Activated B cell treated with CpG ODN at 0.5 μM for 24 hours (primary cell): ENCODE measurements at regions of chr1 and their contacts with region 1.

Region 1: DNA sequence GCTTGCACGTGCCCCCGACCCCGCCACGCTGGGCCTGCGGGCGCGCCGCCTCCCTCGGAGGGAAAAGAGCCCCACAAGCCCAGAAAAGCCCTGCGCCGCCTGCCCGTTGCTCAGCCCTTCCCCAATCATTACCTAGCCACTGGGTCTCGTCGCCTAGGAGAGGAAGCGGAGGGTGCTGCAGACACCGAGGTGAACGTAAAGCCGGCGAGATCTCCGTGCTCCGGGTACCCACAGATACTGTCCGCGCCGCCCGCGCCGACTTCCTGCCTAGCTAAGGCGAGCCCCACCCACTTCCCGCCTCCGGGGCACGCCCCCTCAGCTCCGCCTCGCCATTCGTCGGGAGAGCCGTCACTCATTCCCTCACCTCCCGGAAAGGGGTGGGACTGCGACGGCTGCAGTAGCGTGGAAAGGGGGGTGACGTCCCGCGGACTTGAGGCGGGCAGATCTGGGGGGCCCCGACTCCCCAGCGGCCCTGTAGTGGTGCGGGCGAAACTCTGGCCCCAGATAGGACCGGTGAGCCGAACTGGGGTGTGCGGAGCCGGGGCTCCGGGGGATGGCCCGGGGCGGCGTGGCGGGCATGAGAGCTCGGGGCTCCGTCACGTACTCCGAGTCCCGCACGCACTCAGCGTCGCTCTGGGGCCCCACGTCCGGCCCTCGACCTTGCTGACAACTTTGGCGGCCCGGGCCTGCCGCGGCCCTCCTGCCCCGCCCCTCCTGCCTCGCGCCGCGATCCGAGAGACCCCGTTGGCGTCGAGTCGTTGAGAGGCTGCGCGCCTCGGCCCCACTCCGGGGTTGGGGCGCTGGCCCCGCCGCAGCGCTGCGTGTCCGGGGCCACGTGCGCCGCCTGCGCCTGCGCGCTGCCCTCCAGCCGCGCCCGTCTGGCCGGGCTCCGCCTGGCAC is at the start of gene ENO1:
- DNase-seq: peak; percentile 100
- ATAC-seq: peak; percentile 79
- H3K4me3 Mint-ChIP-seq: peak within 1 kb of the TSS; percentile 95
- H3K27ac Mint-ChIP-seq: peak within 1 kb of the TSS; percentile 96
- H3K4me1 Mint-ChIP-seq: peaks cover 45% of the 10 kb centered on the region
- H3K27me3 Mint-ChIP-seq: no peaks in the 10 kb centered on the region
- CTCF ChIP-seq: no peak
- total RNA-seq, gene ENO1: 837 and 886 TPM in 2 replicates

Region 2: DNA sequence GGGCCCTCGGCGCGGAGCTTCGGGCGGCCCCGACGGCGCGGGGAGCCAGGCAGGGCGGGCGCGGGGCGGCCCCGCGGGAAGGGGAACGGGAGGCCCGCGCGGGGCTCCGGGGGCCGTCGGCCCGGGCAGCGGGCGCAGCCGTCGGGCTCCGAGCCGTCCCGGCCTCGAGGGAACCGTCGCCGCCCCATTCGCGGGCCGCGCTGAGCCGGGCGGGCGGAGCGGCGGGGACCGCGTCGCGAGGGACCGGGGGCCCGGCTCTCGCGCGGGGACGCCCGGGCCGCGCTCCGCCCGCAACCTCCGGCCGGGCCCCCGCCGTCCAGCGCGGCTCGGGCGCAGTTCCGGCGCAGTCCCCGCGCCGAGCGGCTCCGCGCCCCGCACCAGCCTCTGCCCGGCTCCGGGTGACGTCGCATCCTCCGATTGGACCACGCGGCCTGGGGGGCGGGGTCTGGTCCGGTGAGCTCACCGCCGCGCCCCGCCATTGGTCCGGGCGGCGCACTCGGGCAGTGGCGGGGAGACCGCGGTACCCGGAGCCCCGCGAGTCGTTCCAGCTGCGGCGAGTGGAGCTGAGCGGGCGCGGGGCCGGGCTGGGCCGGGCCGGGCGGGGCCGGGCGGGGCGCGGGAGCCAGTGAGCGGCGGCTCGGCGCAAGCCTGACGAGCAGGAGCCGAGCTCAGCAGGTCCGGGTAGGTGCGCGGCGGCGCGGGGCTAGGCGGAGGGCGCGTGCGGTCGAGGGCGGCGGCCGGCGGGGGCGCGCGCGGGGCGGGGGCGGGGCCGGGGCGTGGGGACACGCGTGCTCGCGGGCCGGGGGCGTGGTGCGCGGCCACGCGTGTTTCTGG is 1174.3 kb before region 1 on chr1:
- CTCF ChIA-PET with region 1: no interaction called
- POLR2A ChIA-PET with region 1: no interaction called
- intact Hi-C with region 1: loop called (anchors 5 kb)
- DNase-seq: peak; percentile 99
- ATAC-seq: peak; percentile 98
- H3K4me3 Mint-ChIP-seq: peak overlapping the region; percentile 82
- H3K27ac Mint-ChIP-seq: no peak overlapping the region
- H3K4me1 Mint-ChIP-seq: peaks cover 12% of the 10 kb centered on the region
- H3K27me3 Mint-ChIP-seq: peaks cover 11% of the 10 kb centered on the region
- CTCF ChIP-seq: no peak

Region 3: GRCh38 chr1:8789314-8790214 is 89.1 kb before region 1 on chr1:
- CTCF ChIA-PET with region 1: no interaction called
- POLR2A ChIA-PET with region 1: interaction called, 12 read pairs
- intact Hi-C with region 1: no loop called
- DNase-seq: no peak
- ATAC-seq: no peak
- H3K4me3 Mint-ChIP-seq: no peak overlapping the region
- H3K27ac Mint-ChIP-seq: no peak overlapping the region
- H3K4me1 Mint-ChIP-seq: peaks cover 9% of the 10 kb centered on the region
- H3K27me3 Mint-ChIP-seq: no peaks in the 10 kb centered on the region
- CTCF ChIP-seq: no peak

Region 4: DNA sequence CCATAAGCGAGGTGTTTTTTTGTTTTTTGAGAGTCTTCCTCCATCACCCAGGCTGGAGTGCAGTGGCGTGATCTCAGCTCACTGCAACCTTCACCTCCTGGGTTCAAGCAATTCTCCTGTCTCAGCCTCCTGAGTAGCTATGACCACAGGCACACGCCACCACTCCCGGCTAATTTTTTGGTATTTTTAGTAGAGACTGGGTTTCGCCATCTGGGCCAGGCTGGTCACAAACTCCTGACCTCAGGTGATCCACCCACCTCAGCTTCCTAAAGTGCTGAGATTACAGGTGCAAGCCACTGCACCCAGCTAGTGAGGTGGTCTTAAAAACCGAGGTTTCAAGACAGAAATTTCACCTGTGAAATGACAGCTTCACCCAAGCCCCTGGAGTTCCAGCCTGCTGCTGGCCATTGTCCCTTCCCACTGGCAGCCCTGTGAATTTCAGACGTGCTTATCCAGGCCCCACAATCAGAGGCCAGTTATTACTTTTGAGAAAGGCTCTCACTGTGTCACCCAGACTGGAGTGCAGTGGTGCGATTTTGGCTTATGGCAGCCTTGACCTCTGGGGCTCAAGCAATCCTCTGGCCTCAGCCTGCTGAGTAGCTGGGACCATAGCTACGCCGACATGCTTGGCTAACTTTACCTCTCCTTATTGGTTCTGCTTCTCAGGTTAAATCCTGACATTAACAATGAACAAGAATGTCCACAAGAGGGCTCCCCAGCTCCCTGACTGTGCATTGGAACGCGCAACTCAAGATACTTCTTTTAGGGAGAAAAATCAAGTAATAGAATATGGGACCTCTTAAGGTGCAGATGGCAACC is 19.6 kb before region 1 on chr1:
- CTCF ChIA-PET with region 1: interaction called, 21 read pairs
- POLR2A ChIA-PET with region 1: interaction called, 30 read pairs
- intact Hi-C with region 1: loop called (anchors 1 kb)
- DNase-seq: no peak
- ATAC-seq: peak; percentile 80
- H3K4me3 Mint-ChIP-seq: no peak overlapping the region
- H3K27ac Mint-ChIP-seq: peak overlapping the region; percentile 13
- H3K4me1 Mint-ChIP-seq: peaks cover 21% of the 10 kb centered on the region
- H3K27me3 Mint-ChIP-seq: no peaks in the 10 kb centered on the region
- CTCF ChIP-seq: no peak

Region 5: DNA sequence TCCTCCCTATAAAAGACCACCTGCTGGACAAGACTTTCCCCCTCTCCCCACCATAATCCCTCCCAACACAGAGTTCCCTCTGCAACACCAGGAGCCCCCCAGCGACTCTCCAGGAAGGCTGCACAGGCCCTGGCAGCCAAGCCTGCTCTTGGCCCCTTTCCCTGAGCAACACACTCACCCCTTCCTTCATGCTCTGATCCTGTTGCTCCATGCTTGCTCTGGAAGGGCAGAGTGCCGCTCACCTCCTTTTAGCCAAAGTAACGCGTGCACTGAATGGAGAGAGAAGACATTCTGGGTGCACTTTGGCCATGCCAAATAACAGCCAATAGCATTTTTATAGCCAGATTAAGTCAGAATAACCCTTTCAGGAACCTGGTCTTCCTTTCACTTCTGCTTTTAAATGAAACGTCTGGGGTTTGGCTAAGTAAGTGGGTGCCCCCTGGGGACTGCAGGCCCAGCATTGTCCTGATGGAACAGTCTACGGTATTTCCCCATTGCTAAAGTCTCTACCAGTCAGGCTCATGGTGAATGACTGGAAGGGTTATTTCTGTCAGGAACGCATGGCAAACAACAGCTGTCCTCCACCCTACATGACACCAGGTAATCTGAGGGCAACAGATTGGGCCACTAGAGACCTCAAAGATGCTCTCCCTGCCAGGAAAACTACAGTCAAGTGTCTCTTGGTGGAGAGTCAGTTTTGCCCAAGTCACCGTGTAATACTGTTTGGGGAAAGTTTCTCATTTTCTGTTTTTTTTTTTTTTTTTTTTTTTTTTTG is 190.8 kb after region 1 on chr1 and contains the start of gene SLC2A5:
- CTCF ChIA-PET with region 1: no interaction called
- POLR2A ChIA-PET with region 1: interaction called, 13 read pairs
- intact Hi-C with region 1: no loop called
- DNase-seq: peak; percentile 65
- ATAC-seq: peak; percentile 98
- H3K4me3 Mint-ChIP-seq: peak within 1 kb of the TSS; percentile 83
- H3K27ac Mint-ChIP-seq: peak within 1 kb of the TSS; percentile 64
- H3K4me1 Mint-ChIP-seq: peaks cover 71% of the 10 kb centered on the region
- H3K27me3 Mint-ChIP-seq: no peaks in the 10 kb centered on the region
- CTCF ChIP-seq: no peak
- total RNA-seq, gene SLC2A5: 3.6 and 4.5 TPM in 2 replicates

Region 6: DNA sequence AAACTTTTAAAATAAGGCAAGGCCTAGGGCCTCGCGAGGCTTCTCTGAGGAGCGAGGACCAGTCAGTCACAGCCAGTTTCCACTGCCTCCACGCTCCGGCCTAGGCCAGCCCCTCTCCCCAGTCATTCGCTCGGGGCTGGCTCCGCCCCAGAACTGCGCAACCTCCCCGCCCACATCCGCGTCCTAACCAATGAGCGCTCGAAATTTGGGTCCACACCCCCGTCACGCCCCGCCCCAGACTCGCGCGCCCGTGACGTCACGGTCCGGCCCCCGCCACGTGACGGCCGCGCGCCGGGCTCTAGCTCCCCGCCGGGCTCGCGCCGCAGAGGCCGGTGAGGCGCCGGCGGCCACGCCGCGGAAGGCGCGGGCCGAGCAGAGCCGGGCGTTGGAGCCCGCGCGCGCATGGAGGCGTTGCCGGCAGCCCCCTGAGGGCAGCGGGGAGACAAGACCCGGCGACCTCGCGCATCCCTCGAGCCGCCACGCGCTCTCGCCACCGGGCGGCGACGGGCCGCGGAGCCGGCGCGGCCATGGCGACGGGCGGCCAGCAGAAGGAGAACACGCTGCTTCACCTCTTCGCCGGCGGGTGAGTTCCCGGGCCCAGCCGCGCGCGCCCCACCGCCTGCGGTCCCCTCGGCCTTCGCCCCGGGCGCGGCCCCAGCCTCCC is 660.6 kb after region 1 on chr1 and contains the start of gene SLC25A33:
- CTCF ChIA-PET with region 1: no interaction called
- POLR2A ChIA-PET with region 1: no interaction called
- intact Hi-C with region 1: loop called (anchors 2 kb)
- DNase-seq: peak; percentile 99
- ATAC-seq: peak; percentile 96
- H3K4me3 Mint-ChIP-seq: peak within 1 kb of the TSS; percentile 92
- H3K27ac Mint-ChIP-seq: peak within 1 kb of the TSS; percentile 90
- H3K4me1 Mint-ChIP-seq: peaks cover 29% of the 10 kb centered on the region
- H3K27me3 Mint-ChIP-seq: no peaks in the 10 kb centered on the region
- CTCF ChIP-seq: no peak
- total RNA-seq, gene SLC25A33: 6.5 and 7.5 TPM in 2 replicates